ENCODE measurements at regions of chr6 and their contacts with region 1.

Region 1: GRCh38 chr6:78157606-78158005 is 504.8 kb downstream of the MEI4 start:
- DNase-seq: no peak
- H3K4me3 ChIP-seq: no peak overlapping the region
- H3K4me3 Mint-ChIP-seq: no peak overlapping the region
- H3K27ac ChIP-seq: no peak overlapping the region
- H3K27ac Mint-ChIP-seq: peak overlapping the region in 1 of 7 donors; percentile 86
- H3K4me1 ChIP-seq: no peaks in the 10 kb centered on the region
- H3K4me1 Mint-ChIP-seq: no peaks in the 10 kb centered on the region
- H3K27me3 ChIP-seq: no peaks in the 10 kb centered on the region
- H3K27me3 Mint-ChIP-seq: no peaks in the 10 kb centered on the region
- CTCF ChIP-seq: no peak

Region 2: DNA sequence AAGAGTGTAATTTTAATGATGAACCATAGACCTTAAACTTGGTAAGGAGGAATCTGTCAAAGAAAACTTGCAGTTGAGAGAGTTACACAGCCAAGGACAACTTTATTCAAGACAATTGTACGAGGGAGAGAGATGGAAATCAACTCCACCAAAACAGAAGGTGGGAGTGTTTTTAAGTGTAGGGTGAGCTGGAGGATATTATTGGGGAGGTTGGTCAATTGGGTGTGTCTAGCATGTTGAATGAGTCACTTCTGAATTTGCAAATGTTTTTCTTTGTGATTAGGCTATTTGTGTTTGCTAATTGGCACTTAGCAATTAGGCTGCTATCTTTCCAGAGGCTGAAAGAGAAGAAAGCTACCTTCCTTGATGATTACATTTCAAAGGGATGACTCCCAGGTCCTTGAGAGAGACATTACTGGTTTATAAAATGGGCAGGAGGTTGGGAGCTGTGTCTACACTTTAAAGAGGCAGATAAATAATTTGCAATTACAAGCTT is 63.7 kb before region 1 on chr6:
- intact Hi-C with region 1: loop called in 1 of 2 experiments (anchors 10 kb)
- DNase-seq: no peak
- H3K4me3 ChIP-seq: no peak overlapping the region
- H3K4me3 Mint-ChIP-seq: no peak overlapping the region
- H3K27ac ChIP-seq: no peak overlapping the region
- H3K27ac Mint-ChIP-seq: no peak overlapping the region
- H3K4me1 ChIP-seq: no peaks in the 10 kb centered on the region
- H3K4me1 Mint-ChIP-seq: no peaks in the 10 kb centered on the region
- H3K27me3 ChIP-seq: no peaks in the 10 kb centered on the region
- H3K27me3 Mint-ChIP-seq: peaks cover 0 to 2% (median 0%) of the 10 kb centered on the region in 3 donors
- CTCF ChIP-seq: no peak

Measured in CD14-positive monocyte (primary cell).